ENCODE measurements at regions of chr18 and their contacts with region 1.

Region 1: GRCh38 chr18:62425465-62426195 is 97.2 kb upstream of the ZCCHC2 start:
- DNase-seq: no peak
- ATAC-seq: no peak
- H3K4me3 Mint-ChIP-seq: no peak overlapping the region
- H3K27ac Mint-ChIP-seq: no peak overlapping the region
- H3K4me1 Mint-ChIP-seq: peaks cover 10% of the 10 kb centered on the region
- H3K27me3 Mint-ChIP-seq: peaks cover 3% of the 10 kb centered on the region
- CTCF ChIP-seq: peak; percentile 50

Region 2: GRCh38 chr18:62566199-62566598 is 140.6 kb after region 1 on chr18:
- CTCF ChIA-PET with region 1: interaction called, 3 read pairs
- POLR2A ChIA-PET with region 1: no interaction called
- intact Hi-C with region 1: loop called (anchors 1 kb)
- DNase-seq: no peak
- ATAC-seq: no peak
- H3K4me3 Mint-ChIP-seq: no peak overlapping the region
- H3K27ac Mint-ChIP-seq: no peak overlapping the region
- H3K4me1 Mint-ChIP-seq: no peaks in the 10 kb centered on the region
- H3K27me3 Mint-ChIP-seq: no peaks in the 10 kb centered on the region
- CTCF ChIP-seq: no peak

Region 3: GRCh38 chr18:62576845-62577512 is 151.3 kb after region 1 on chr18:
- CTCF ChIA-PET with region 1: interaction called, 10 read pairs
- POLR2A ChIA-PET with region 1: no interaction called
- intact Hi-C with region 1: no loop called
- DNase-seq: no peak
- ATAC-seq: no peak
- H3K4me3 Mint-ChIP-seq: no peak overlapping the region
- H3K27ac Mint-ChIP-seq: peak overlapping the region; percentile 20
- H3K4me1 Mint-ChIP-seq: peaks cover 18% of the 10 kb centered on the region
- H3K27me3 Mint-ChIP-seq: no peaks in the 10 kb centered on the region
- CTCF ChIP-seq: no peak